ENCODE measurements at regions of chr12 and their contacts with region 1.

Region 1: DNA sequence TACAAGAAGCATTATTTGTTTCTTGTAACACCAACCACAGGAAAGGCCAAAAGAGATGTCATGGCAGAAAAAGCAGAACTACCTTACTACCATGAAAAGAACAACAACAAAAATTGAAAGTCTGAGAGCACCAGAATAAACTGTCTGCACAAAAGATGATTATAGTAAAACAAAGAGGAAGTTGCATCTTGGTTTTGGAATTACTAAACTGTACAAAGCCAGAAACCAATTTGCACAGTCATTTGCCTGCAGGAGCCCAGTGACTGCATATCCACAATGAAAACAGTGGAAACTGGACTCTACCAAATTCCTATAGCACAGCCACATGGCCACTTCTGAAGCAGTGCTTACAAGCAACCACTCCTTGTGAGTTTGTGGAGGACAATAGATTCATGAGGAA is 276.2 kb downstream of the SSPN start:
- DNase-seq: no peak
- ATAC-seq: peak; percentile 60
- H3K4me3 Mint-ChIP-seq: peak overlapping the region; percentile 49
- H3K27ac Mint-ChIP-seq: peak overlapping the region; percentile 86
- H3K4me1 Mint-ChIP-seq: peaks cover 54% of the 10 kb centered on the region
- H3K27me3 Mint-ChIP-seq: no peaks in the 10 kb centered on the region
- CTCF ChIP-seq: no peak

Region 2: DNA sequence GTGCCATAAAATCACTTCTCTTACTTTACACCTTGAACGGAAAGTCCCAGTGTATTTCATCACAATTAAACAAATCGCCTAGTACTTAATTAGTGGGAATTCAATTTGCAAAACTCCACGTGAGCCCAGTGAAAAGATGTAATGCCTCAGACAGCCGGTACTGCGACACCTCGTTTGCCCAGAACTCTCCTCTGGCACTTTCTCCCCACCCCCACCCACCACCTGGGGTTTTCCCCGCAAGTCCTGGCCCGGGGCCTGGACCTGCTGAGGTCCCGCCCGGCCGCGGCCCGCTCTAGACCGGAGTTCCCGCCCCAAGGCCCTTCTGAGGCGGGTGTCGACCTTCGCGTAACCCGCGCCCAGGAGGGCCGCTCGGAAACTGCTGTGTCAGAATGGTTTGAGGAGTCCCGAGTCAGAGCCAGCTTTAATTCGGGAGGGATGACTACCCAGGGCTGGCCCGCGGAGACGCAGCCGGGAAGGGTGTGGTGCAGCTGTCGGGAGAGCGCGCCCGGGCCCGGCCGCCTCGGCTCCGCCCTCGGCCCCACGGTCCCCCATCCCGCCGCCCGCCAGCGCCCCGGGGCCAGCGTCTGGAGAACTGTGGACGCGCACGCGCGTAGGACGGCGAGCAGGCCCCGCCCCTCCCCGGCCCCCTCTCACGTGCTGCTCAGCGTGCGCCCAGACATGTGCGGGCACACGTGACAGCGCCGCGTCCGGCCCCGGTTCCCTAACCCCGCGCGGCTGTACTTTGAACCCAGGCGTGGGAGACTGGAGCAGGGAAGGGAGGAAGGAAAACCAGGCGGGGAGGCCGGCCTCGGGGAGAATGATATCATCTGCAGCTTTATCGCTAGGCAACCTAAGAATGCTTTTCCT is 357.5 kb before region 1 on chr12:
- CTCF ChIA-PET with region 1: interaction called, 3 read pairs
- POLR2A ChIA-PET with region 1: no interaction called
- intact Hi-C with region 1: loop called (anchors 1 kb)
- DNase-seq: peak; percentile 77
- ATAC-seq: peak; percentile 80
- H3K4me3 Mint-ChIP-seq: peak overlapping the region; percentile 85
- H3K27ac Mint-ChIP-seq: peak overlapping the region; percentile 92
- H3K4me1 Mint-ChIP-seq: peaks cover 58% of the 10 kb centered on the region
- H3K27me3 Mint-ChIP-seq: no peaks in the 10 kb centered on the region
- CTCF ChIP-seq: no peak

Region 3: GRCh38 chr12:26274441-26275312 is 196.9 kb before region 1 on chr12:
- CTCF ChIA-PET with region 1: no interaction called
- POLR2A ChIA-PET with region 1: no interaction called
- intact Hi-C with region 1: loop called (anchors 1 kb)
- DNase-seq: peak; percentile 43
- ATAC-seq: peak; percentile 98
- H3K4me3 Mint-ChIP-seq: peak overlapping the region; percentile 28
- H3K27ac Mint-ChIP-seq: peak overlapping the region; percentile 78
- H3K4me1 Mint-ChIP-seq: peaks cover 53% of the 10 kb centered on the region
- H3K27me3 Mint-ChIP-seq: no peaks in the 10 kb centered on the region
- CTCF ChIP-seq: no peak

Region 4: DNA sequence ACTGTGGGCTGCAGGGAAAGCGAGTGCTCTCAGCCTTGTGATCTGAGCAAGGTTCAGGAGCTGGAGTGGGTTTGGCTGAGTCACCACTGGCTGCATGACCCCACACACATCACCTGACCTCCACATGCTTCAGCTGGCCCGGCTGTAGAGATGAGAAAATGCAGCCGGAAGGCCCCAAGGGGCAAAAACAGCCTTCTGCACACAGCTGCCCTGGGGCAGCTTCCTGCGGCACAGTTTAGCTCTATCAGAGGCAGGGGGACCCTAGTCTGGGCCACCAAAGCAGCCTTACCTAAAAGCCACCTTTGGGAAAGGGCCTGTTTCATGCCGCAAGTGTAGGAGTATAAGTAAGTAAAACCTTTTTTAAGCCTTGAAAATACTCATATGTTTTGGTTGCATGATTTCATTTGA is 152.9 kb before region 1 on chr12:
- CTCF ChIA-PET with region 1: no interaction called
- POLR2A ChIA-PET with region 1: no interaction called
- intact Hi-C with region 1: loop called (anchors 1 kb)
- DNase-seq: peak; percentile 50
- ATAC-seq: peak; percentile 85
- H3K4me3 Mint-ChIP-seq: peak overlapping the region; percentile 11
- H3K27ac Mint-ChIP-seq: peak overlapping the region; percentile 83
- H3K4me1 Mint-ChIP-seq: peaks cover 39% of the 10 kb centered on the region
- H3K27me3 Mint-ChIP-seq: no peaks in the 10 kb centered on the region
- CTCF ChIP-seq: no peak

Region 5: GRCh38 chr12:26443309-26443708 is 28.3 kb before region 1 on chr12:
- CTCF ChIA-PET with region 1: no interaction called
- POLR2A ChIA-PET with region 1: no interaction called
- intact Hi-C with region 1: loop called (anchors 1 kb)
- DNase-seq: no peak
- ATAC-seq: peak; percentile 25
- H3K4me3 Mint-ChIP-seq: no peak overlapping the region
- H3K27ac Mint-ChIP-seq: no peak overlapping the region
- H3K4me1 Mint-ChIP-seq: peaks cover 22% of the 10 kb centered on the region
- H3K27me3 Mint-ChIP-seq: no peaks in the 10 kb centered on the region
- CTCF ChIP-seq: no peak

Region 6: GRCh38 chr12:26488353-26488752 is 16.8 kb after region 1 on chr12:
- CTCF ChIA-PET with region 1: no interaction called
- POLR2A ChIA-PET with region 1: no interaction called
- intact Hi-C with region 1: no loop called
- DNase-seq: no peak
- ATAC-seq: no peak
- H3K4me3 Mint-ChIP-seq: no peak overlapping the region
- H3K27ac Mint-ChIP-seq: no peak overlapping the region
- H3K4me1 Mint-ChIP-seq: no peaks in the 10 kb centered on the region
- H3K27me3 Mint-ChIP-seq: no peaks in the 10 kb centered on the region
- CTCF ChIP-seq: no peak